GM12878 (cell line): ENCODE measurements at regions of chr6 and their contacts with region 1.

Region 1: DNA sequence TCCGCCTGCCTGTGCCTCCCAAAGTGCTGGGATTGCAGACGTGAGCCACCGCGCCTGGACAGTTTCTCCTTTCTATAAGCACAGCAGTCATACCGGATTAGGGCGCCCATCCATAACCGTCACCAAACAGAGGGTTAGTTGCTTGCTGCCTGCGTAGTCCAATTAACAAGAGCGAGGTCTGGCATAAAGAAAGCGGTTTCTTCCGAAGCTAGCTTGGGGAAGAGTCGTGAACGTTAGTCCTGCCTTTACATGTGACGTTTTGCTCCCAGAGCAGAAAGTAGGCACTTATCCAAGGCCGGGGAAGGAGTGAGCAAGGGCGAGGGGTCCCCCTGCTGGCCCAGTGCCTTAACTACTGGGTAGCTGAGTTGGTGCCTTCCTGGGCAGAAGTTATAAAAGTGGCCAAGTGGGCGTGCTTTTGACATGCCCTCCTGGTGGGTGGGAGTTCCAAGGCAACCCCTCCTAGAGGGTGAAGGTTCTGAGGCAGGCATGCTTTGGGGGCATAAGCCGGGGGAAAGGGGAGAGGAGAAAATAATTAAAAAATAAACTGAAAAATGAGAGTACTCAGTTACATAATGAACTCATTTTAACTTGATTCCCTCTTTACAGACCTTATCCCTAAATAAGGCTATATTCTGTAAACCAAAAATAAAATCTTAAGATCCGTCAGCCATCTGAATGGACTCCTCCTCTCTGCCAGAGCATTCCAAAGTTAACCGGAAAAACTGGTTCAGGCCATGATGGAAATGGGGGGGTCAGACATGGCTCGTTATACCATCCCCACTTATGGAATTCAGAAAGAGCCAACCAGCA is 88.0 kb downstream of the FAM217A start:
- DNase-seq: no peak
- ATAC-seq: peak; percentile 97
- H3K4me3 ChIP-seq: no peak overlapping the region
- H3K27ac ChIP-seq: no peak overlapping the region
- H3K4me1 ChIP-seq: no peaks in the 10 kb centered on the region
- H3K27me3 ChIP-seq: no peaks in the 10 kb centered on the region
- CTCF ChIP-seq: peak; percentile 82 to 88 (median 85)
- EP300 ChIP-seq: no peak
- POLR2A ChIP-seq: no peak
- RAD21 ChIP-seq: peak; percentile 81

Region 2: GRCh38 chr6:3849681-3850450 is 141.0 kb before region 1 on chr6:
- CTCF ChIA-PET with region 1: no interaction called
- POLR2A ChIA-PET with region 1: no interaction called
- RAD21 ChIA-PET with region 1: no interaction called
- SMC1A ChIA-PET with region 1: no interaction called
- in situ Hi-C with region 1: no loop called
- intact Hi-C with region 1: loop called (anchors 5 kb)
- DNase-seq: no peak
- ATAC-seq: no peak
- H3K4me3 ChIP-seq: peak overlapping the region; percentile 62
- H3K27ac ChIP-seq: peak overlapping the region; percentile 35
- H3K4me1 ChIP-seq: peaks cover 15% of the 10 kb centered on the region
- H3K27me3 ChIP-seq: no peaks in the 10 kb centered on the region
- CTCF ChIP-seq: no peak
- EP300 ChIP-seq: no peak
- POLR2A ChIP-seq: no peak; the same call in 1 of the 2 replicates
- RAD21 ChIP-seq: no peak